Adrenal gland (tissue), 19 donors: ENCODE measurements at regions of chr18 and their contacts with region 1.

Region 1: DNA sequence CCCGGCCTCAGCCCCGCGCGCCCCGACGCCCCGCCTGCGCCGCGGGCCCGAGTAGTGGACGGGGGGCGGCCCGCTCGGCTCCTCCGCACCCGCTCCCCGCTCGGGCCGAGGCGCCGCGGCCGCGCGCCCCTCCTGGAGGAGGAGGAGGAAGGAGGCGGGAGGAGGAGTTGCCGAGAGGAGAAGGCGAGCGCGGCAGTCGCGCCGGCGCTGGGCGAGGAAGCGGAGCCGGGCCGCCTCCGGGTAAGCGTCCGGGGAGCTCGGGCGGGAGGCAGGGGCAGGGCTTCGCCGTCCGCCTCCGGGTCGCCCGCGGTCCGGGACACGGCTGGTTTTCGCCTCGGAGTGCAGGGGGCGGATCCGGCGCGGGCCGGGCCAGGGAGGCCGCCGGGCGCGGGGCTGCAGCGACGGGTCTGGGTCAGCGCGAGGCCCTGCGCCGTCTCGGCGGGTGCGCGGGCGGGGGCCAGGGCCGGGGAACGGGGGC is at the start of gene SOCS6:
- DNase-seq: peak; percentile 58 to 71 (median 63)
- H3K4me3 ChIP-seq: peak within 1 kb of the TSS; percentile 28 to 90 (median 72)
- H3K27ac ChIP-seq: peak within 1 kb of the TSS in 4 of 5 donors; percentile 84 to 95 (median 90)
- H3K4me1 ChIP-seq: peaks cover 16 to 40% of the 10 kb centered on the region in 2 donors
- H3K27me3 ChIP-seq: no peaks in the 10 kb centered on the region
- CTCF ChIP-seq: peak in 1 of 6 experiments; percentile 1
- POLR2A ChIP-seq: peak; percentile 62 to 64
- total RNA-seq, gene SOCS6: 14.2 to 25.5 (median 19.2) TPM

Region 2: DNA sequence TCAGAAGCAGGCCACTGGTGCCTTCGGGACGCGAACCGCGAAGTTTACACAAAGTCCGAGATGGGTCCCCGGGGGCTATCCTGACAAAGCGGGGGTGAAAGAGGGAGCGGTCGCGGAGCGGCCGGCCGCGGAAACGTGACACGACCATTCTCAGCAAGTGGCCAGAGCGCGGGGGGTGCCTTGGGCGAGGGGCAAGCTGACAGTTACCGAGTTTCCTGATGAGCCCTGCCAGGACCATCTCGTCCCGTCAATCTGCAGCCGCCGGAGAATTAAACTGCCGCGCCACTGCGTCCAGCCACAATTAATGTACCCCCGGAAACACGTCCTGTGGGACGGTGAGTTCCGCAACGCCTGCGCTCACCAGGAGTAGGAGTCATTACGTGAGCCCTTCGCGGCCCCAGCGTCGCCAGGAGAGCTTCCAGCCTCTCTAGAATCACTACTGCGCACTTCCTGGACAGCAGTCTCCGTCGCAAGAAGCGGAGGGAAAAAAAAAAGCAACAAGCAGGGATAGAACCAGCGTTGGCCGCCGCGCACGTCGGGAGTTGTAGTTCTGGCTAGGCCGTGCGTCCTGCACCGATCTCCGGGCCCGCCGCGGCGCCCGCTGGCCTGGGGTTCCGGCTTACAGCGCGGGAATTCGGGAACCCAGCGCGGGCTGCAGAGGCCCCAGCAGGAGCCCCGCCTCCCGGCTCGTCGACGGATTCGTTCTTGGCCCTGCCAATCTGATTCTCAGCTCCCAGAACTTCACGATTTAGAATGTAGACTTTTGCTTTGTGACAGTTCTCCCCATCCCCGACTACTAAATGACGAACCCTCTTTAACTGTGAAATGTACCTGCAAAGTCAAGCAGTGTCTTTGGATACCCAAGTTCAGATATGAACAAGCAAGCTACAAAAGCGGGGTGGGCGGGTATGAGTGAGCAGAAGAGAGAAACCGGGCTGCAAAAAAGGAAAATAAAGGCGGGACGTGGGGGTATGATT is 83.2 kb before region 1 on chr18 and contains the start of gene RTTN:
- intact Hi-C with region 1: loop called in 1 of 2 experiments (anchors 10 kb)
- DNase-seq: peak; percentile 92 to 97 (median 95)
- H3K4me3 ChIP-seq: peak within 1 kb of the TSS; percentile 16 to 88 (median 68)
- H3K27ac ChIP-seq: peak within 1 kb of the TSS; percentile 79 to 98 (median 97)
- H3K4me1 ChIP-seq: peaks cover 5 to 11% of the 10 kb centered on the region in 2 donors
- H3K27me3 ChIP-seq: no peaks in the 10 kb centered on the region
- CTCF ChIP-seq: peak in 2 of 6 experiments; percentile 22 to 32
- POLR2A ChIP-seq: peak in 1 of 2 donors; percentile 43
- total RNA-seq, gene RTTN: 4.0 to 22.5 (median 10.7) TPM

Region 3: DNA sequence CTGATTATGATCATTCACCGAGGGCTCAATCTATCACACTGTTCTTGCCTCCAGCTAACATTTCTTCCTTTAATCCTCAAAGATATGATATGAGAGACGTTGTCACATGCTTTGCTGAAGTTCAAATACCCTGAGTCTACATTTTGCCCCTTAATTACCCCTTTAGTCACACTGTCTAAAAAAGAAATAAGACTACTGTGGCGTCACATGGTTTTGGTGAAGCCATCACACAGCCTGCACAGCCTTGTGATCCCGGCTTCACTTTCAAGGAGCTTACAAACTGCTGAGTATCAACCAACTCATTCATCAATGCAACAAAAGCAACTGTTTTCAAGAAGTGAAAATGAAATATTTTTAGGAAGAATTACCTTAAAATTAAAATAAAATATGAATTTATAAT is 31.9 kb before region 1 on chr18:
- intact Hi-C with region 1: no loop called
- DNase-seq: peak in 6 of 7 donors; percentile 24 to 52 (median 37)
- H3K4me3 ChIP-seq: no peak overlapping the region
- H3K27ac ChIP-seq: peak overlapping the region in 1 of 5 donors; percentile 45
- H3K4me1 ChIP-seq: peaks cover 0 to 7% of the 10 kb centered on the region in 2 donors
- H3K27me3 ChIP-seq: no peaks in the 10 kb centered on the region
- CTCF ChIP-seq: no peak
- POLR2A ChIP-seq: no peak